ENCODE measurements at regions of chr11 and their contacts with region 1.

Region 1: DNA sequence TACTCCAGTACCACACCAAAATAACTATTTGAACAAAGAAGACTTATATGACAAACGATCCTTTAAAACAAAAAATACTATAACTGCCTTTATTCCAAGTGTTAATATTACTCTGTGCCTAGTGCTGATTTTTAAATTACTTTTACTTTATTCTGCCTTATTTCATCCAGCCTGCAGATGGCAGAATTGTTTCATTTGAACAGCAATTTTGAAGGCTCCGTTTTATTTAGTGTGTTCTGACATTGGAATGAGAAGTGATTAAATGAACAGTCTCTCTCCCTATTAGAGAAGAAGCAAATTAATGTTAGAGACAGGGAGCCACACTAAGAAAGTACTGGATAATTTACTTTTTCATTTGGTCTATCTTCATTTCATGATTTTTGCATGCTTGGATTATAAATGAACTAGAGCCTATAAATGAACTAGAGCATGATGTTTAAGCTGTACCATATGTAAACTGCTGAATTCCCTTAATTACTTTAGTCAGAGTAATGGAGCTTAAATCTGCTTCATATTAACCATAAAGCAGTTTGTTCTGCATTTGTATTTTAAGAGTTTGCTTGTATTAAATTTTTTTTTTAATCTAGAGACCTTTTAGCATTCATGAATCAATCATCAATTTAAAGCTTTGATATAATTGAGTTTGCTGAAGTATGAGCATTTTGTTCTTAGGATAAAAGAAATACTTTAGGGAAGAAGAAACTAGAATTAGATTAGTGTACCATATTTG is 9.8 kb downstream of the PDHX start:
- DNase-seq: peak; percentile 67
- ATAC-seq: peak; percentile 56
- H3K4me3 ChIP-seq: no peak overlapping the region
- H3K27ac ChIP-seq: no peak overlapping the region
- H3K4me1 ChIP-seq: peaks cover 12% of the 10 kb centered on the region
- H3K27me3 ChIP-seq: no peaks in the 10 kb centered on the region
- CTCF ChIP-seq: peak; percentile 86

Region 2: DNA sequence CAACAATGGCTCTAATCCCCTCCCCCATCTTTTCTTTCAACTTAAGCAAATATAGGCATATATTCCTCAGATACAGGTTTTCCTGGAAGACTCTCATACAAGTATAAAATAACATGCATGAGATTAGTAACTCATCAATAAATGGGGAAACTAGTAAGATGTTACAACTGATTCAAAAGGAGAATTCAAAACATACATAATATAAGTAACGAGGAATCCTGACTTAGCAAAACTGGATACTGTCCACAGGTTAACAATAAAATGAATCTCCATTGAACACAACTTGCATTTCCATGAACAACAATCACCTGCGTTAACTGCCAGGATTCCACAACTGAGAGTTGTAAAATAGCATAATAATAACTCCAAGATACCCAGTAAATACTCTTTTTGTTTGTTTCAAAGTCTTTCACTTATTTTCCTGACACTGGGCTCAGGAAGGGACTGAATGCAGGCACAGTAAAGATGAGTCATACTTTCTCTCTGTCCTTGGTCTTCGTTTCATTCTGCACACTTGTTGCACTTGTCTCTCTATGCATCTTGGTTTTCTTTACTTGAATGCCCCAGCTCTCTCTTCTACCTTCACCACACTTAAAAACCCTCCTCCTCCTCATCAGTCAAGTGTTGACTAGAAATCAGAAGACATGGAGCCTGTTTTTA is 18.2 kb before region 1 on chr11:
- CTCF ChIA-PET with region 1: no interaction called
- POLR2A ChIA-PET with region 1: no interaction called
- intact Hi-C with region 1: no loop called
- DNase-seq: no peak
- ATAC-seq: peak; percentile 73
- H3K4me3 ChIP-seq: no peak overlapping the region
- H3K27ac ChIP-seq: no peak overlapping the region
- H3K4me1 ChIP-seq: peaks cover 5% of the 10 kb centered on the region; the same call in 1 of the 2 replicates
- H3K27me3 ChIP-seq: no peaks in the 10 kb centered on the region
- CTCF ChIP-seq: no peak

Region 3: GRCh38 chr11:34997952-34998528 is 71.8 kb after region 1 on chr11:
- CTCF ChIA-PET with region 1: no interaction called
- POLR2A ChIA-PET with region 1: no interaction called
- intact Hi-C with region 1: loop called (anchors 2 kb)
- DNase-seq: peak; percentile 71
- ATAC-seq: peak; percentile 74
- H3K4me3 ChIP-seq: peak overlapping the region; percentile 5; the same call in 1 of the 2 replicates
- H3K27ac ChIP-seq: peak overlapping the region; percentile 79
- H3K4me1 ChIP-seq: peaks cover 20% of the 10 kb centered on the region
- H3K27me3 ChIP-seq: no peaks in the 10 kb centered on the region
- CTCF ChIP-seq: peak; percentile 85

Region 4: DNA sequence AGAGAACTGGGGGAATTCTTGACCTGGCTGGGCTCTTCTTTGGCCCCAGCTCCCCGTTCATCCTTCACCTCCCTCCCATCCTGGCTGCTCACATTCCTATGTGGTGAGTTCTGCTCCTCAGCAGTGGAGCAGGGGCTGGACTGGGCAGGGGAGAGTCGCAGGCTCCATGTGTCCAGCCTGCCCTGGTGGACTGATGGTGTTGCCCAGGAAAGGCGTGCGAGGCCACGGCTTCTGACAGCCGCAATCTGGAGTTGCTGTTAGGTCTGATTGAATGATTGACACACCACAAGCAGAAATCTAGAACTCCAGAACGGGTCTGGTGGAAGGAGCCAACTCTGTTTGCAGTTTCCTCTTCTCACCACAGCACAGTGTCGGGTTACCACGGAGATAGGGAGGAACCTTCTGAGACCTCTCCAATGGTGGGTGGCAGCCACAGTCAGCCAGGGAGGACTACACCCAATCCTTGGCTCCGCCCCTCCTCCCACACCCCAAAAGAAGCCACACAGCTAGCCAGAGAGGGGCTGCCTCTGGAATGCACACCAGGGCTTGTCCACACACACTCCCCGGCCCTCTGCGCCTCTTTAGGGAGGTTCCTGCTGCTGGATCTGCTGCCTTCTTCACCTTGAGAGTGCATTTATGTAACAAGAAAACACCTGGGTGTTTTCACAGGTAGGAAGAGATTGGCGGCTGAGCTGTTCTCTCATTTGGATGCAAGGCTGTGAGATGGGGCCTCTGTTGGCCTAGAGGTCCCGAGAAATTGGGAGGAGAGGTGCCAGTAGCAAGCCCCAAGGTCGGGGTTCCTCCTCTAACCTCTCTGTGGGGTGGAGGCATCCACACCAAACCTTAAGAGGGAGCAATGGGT is 156.3 kb after region 1 on chr11:
- CTCF ChIA-PET with region 1: no interaction called
- POLR2A ChIA-PET with region 1: no interaction called
- intact Hi-C with region 1: no loop called
- DNase-seq: peak; percentile 80
- ATAC-seq: peak; percentile 79
- H3K4me3 ChIP-seq: no peak overlapping the region
- H3K27ac ChIP-seq: peak overlapping the region; percentile 70
- H3K4me1 ChIP-seq: peaks cover 48% of the 10 kb centered on the region
- H3K27me3 ChIP-seq: no peaks in the 10 kb centered on the region
- CTCF ChIP-seq: no peak

Region 5: GRCh38 chr11:35165423-35166368 is 239.4 kb after region 1 on chr11:
- CTCF ChIA-PET with region 1: no interaction called
- POLR2A ChIA-PET with region 1: no interaction called
- intact Hi-C with region 1: loop called (anchors 5 kb)
- DNase-seq: peak; percentile 71
- ATAC-seq: peak; percentile 29
- H3K4me3 ChIP-seq: peak overlapping the region; percentile 42
- H3K27ac ChIP-seq: peak overlapping the region; percentile 97
- H3K4me1 ChIP-seq: peaks cover 64% of the 10 kb centered on the region
- H3K27me3 ChIP-seq: no peaks in the 10 kb centered on the region
- CTCF ChIP-seq: no peak

Region 6: DNA sequence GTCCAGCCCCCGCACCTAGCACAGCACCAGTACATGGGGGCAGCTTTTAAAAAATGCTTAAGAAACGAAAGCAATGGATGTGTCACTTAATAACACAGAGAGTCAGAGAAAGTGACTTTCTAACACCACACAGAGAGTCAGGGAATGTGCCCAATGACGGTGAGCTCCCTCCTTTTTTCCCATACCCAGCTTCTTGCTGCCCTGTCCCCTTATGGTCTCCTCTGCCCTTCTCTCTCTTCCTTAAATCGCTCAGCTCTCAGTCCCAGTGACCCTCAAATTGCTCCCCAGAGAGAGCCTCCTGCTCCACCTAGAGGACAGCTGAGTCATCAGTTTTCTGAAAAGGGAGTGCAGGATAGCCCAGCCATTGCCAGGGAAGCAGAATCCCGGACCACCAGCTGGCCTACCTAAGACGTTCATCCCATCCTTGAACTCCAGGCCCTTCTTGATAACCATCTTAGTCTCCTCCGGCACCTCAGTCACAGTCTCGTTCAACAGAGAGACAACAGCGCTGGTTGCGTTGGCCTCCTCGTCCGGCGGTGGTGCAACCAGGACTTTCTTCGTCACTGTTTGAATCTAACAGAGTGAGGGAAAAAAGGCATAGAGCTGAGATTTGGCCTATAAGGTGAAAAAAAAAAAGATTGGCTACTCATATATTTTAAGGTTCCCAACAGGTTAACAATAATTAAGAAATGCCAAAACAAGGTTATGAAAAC is 379.6 kb after region 1 on chr11:
- CTCF ChIA-PET with region 1: interaction called, 5 read pairs
- POLR2A ChIA-PET with region 1: no interaction called
- intact Hi-C with region 1: loop called (anchors 1 kb)
- DNase-seq: peak; percentile 55
- ATAC-seq: peak; percentile 88
- H3K4me3 ChIP-seq: no peak overlapping the region
- H3K27ac ChIP-seq: no peak overlapping the region
- H3K4me1 ChIP-seq: peaks cover 21% of the 10 kb centered on the region
- H3K27me3 ChIP-seq: no peaks in the 10 kb centered on the region
- CTCF ChIP-seq: peak; percentile 67